Activated naive CD8-positive, alpha-beta T cell treated with anti-CD3 and anti-CD28 coated beads, Interleukin-2, amount 10 ng/mL, durations not matched to agents 7 days and 5 days (primary cell): ENCODE measurements at regions of chr1 and their contacts with region 1.

Region 1: GRCh38 chr1:42913426-42914091 is 45.1 kb downstream of the SLC2A1 start:
- DNase-seq: no peak
- ATAC-seq: peak; percentile 68
- H3K4me3 Mint-ChIP-seq: no peak overlapping the region
- H3K27ac Mint-ChIP-seq: no peak overlapping the region
- H3K4me1 Mint-ChIP-seq: peaks cover 5% of the 10 kb centered on the region
- H3K27me3 Mint-ChIP-seq: peaks cover 8% of the 10 kb centered on the region

Region 2: DNA sequence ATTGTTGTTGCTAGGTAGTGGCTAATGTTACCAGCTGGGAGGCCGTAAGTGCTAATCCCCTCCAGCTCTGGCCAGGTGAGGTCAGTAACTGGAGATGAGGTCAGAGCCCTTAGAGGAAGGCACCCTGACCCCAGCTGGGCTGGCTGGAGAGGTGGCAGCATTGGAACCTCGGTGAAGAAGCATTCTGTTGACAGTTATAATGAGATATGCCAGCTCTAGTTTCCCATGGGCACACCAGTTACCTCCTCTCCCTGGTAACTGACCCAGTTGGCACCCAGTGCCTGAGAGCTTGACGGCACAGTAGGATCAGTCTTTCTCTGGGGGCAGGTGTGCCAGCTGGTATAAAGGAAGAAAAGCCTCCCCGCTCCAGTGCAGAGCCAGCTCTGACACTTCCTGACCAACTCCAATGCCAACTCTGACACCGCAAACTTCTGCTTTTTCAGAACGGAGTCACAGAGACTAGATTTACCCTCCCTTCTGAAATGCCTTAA is 80.1 kb after region 1 on chr1:
- POLR2A ChIA-PET with region 1: no interaction called
- DNase-seq: no peak
- ATAC-seq: no peak
- H3K4me3 Mint-ChIP-seq: no peak overlapping the region
- H3K27ac Mint-ChIP-seq: no peak overlapping the region
- H3K4me1 Mint-ChIP-seq: peaks cover 3% of the 10 kb centered on the region
- H3K27me3 Mint-ChIP-seq: peaks cover 4% of the 10 kb centered on the region

Region 3: GRCh38 chr1:43073490-43074230 is 160.1 kb after region 1 on chr1:
- POLR2A ChIA-PET with region 1: interaction called, 10 read pairs
- DNase-seq: peak; percentile 68
- ATAC-seq: peak; percentile 72
- H3K4me3 Mint-ChIP-seq: no peak overlapping the region
- H3K27ac Mint-ChIP-seq: peak overlapping the region; percentile 71
- H3K4me1 Mint-ChIP-seq: peaks cover 4% of the 10 kb centered on the region
- H3K27me3 Mint-ChIP-seq: peaks cover 6% of the 10 kb centered on the region